Right lobe of liver (tissue), 6 donors: ENCODE measurements at regions of chr19 and their contacts with region 1.

Region 1: GRCh38 chr19:17450264-17451075 is 2.0 kb upstream of the TMEM221 start:
- DNase-seq: no peak
- ATAC-seq: no peak
- H3K4me3 ChIP-seq: no peak overlapping the region
- H3K27ac ChIP-seq: no peak overlapping the region
- H3K4me1 ChIP-seq: peaks cover 0 to 6% (median 0%) of the 10 kb centered on the region in 4 donors
- H3K27me3 ChIP-seq: peaks cover 0 to 3% of the 10 kb centered on the region in 2 donors
- CTCF ChIP-seq: no peak
- POLR2A ChIP-seq: no peak

Region 2: GRCh38 chr19:17390665-17391370 is 59.7 kb before region 1 on chr19:
- intact Hi-C with region 1: loop called in 1 of 2 experiments (anchors 10 kb)
- DNase-seq: peak; percentile 84 to 86 (median 84)
- ATAC-seq: peak; percentile 94 to 97 (median 96)
- H3K4me3 ChIP-seq: peak overlapping the region; percentile 13 to 28 (median 24)
- H3K27ac ChIP-seq: no peak overlapping the region
- H3K4me1 ChIP-seq: peaks cover 0 to 5% (median 1%) of the 10 kb centered on the region in 4 donors
- H3K27me3 ChIP-seq: no peaks in the 10 kb centered on the region
- CTCF ChIP-seq: peak; percentile 51 to 71 (median 62)
- POLR2A ChIP-seq: no peak